ENCODE measurements at regions of chr14 and their contacts with region 1.

Region 1: DNA sequence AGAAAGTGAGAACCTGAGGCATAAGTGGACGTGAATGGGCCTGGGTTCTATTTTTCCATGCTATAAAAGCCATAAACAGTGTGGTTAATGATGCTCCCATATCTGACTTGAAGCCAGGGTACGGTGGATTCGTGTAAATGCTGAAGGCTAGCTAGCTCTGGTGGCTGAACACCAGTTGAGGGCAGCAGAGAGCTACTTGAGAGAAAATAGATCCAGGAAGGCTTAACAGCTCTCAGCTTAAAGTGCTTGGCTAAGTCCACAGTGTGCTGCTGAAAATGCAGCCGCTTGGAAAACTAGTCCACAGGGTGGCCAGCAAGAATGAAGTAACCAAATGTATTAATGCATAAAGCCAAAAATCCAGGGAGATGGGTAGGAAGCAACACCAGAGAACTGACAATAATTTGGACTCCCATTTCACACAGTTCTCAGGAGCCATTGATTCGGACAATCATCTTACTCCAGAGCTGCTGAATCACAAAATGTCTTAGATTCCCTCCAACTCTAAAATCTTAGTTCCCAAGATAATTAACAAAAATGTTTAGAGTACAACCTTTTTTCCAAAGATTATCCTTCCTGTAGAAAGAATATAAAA is 15.0 kb upstream of the FOXG1 start:
- DNase-seq: no peak
- ATAC-seq: peak in 1 of 4 donors; percentile 72
- H3K4me3 ChIP-seq: no peak overlapping the region
- H3K27ac ChIP-seq: no peak overlapping the region
- H3K4me1 ChIP-seq: no peaks in the 10 kb centered on the region
- H3K27me3 ChIP-seq: peaks cover 4 to 27% (median 5%) of the 10 kb centered on the region in 3 donors
- CTCF ChIP-seq: no peak

Region 2: DNA sequence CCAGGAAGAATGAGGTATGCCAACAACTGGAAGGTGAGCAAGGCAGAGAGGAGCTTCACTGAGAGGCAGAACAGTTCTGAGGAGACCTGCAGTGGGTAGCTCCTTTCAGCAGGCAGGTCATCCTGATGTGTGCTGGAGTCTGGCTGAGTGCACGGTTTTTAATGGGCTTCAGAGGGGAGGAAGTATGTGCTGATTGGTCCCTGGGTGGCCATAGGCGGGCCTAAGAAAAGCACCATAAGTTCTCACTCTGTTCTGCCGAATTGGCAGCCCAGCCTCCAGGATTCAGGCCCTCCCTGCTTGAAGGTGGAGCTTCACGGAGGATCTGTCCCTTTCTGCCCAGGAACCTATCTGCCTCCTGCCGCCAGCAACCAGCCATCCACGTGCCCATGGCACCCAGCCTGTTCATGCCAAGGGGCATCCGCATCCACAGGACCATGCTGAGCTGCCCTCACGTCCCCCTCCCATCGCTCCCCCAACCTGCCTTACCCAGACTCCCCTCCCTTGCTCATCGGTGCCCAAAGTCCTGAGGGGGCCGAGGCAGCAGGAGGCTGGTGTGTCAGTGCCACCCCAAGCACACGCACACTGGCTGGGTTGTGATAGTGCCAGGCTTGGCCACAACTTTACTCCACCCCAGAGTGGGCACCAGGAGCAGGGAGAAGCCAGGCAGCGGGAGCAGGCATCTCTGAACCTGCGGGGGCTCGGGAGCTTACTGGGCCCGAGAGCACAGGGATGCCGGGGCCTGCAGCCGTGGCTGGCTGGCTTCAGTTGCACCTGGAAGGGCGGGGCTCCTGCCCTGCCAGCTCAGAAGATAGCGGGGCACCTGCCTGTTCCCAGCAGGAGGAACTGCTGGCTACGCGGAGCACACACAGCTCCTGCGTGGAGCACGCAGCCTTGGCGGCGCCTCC is 593.4 kb before region 1 on chr14:
- intact Hi-C with region 1: no loop called
- DNase-seq: no peak
- ATAC-seq: no peak
- H3K4me3 ChIP-seq: no peak overlapping the region
- H3K27ac ChIP-seq: no peak overlapping the region
- H3K4me1 ChIP-seq: no peaks in the 10 kb centered on the region
- H3K27me3 ChIP-seq: no peaks in the 10 kb centered on the region
- CTCF ChIP-seq: no peak

Region 3: GRCh38 chr14:28676479-28676878 is 75.1 kb before region 1 on chr14:
- intact Hi-C with region 1: no loop called
- DNase-seq: no peak
- ATAC-seq: peak in 1 of 4 donors; percentile 90
- H3K4me3 ChIP-seq: no peak overlapping the region
- H3K27ac ChIP-seq: no peak overlapping the region
- H3K4me1 ChIP-seq: no peaks in the 10 kb centered on the region
- H3K27me3 ChIP-seq: no peaks in the 10 kb centered on the region
- CTCF ChIP-seq: no peak

Region 4: GRCh38 chr14:29536886-29537511 is 785.4 kb after region 1 on chr14:
- intact Hi-C with region 1: loop called (anchors 5 to 10 kb)
- DNase-seq: no peak
- ATAC-seq: no peak
- H3K4me3 ChIP-seq: no peak overlapping the region
- H3K27ac ChIP-seq: no peak overlapping the region
- H3K4me1 ChIP-seq: no peaks in the 10 kb centered on the region
- H3K27me3 ChIP-seq: no peaks in the 10 kb centered on the region
- CTCF ChIP-seq: peak; percentile 11

Region 5: GRCh38 chr14:30005114-30005808 is 1253.7 kb after region 1 on chr14:
- intact Hi-C with region 1: loop called in 1 of 2 experiments (anchors 10 kb)
- DNase-seq: no peak
- ATAC-seq: peak in 3 of 4 donors; percentile 37 to 84 (median 64)
- H3K4me3 ChIP-seq: no peak overlapping the region
- H3K27ac ChIP-seq: no peak overlapping the region
- H3K4me1 ChIP-seq: no peaks in the 10 kb centered on the region
- H3K27me3 ChIP-seq: no peaks in the 10 kb centered on the region
- CTCF ChIP-seq: peak; percentile 71

Region 6: GRCh38 chr14:30270200-30271161 is 1518.9 kb after region 1 on chr14:
- intact Hi-C with region 1: loop called in 1 of 2 experiments (anchors 10 kb)
- DNase-seq: peak; percentile 84 to 91
- ATAC-seq: peak; percentile 67 to 97 (median 94)
- H3K4me3 ChIP-seq: no peak overlapping the region
- H3K27ac ChIP-seq: no peak overlapping the region
- H3K4me1 ChIP-seq: no peaks in the 10 kb centered on the region
- H3K27me3 ChIP-seq: peaks cover 1 to 3% (median 3%) of the 10 kb centered on the region in 3 donors
- CTCF ChIP-seq: peak; percentile 64

Measured in psoas muscle (tissue), 8 donors.